IMR-90 (cell line): ENCODE measurements at regions of chr14 and their contacts with region 1.

Region 1: GRCh38 chr14:77067632-77068514 is 30.2 kb upstream of the CIPC start:
- DNase-seq: peak; percentile 57
- ATAC-seq: peak; percentile 85
- H3K4me3 ChIP-seq: no peak overlapping the region
- H3K27ac ChIP-seq: no peak overlapping the region
- H3K4me1 ChIP-seq: peaks cover 3% of the 10 kb centered on the region
- H3K27me3 ChIP-seq: no peaks in the 10 kb centered on the region
- CTCF ChIP-seq: peak; percentile 91
- POLR2A ChIP-seq: no peak
- RAD21 ChIP-seq: peak; percentile 98

Region 2: DNA sequence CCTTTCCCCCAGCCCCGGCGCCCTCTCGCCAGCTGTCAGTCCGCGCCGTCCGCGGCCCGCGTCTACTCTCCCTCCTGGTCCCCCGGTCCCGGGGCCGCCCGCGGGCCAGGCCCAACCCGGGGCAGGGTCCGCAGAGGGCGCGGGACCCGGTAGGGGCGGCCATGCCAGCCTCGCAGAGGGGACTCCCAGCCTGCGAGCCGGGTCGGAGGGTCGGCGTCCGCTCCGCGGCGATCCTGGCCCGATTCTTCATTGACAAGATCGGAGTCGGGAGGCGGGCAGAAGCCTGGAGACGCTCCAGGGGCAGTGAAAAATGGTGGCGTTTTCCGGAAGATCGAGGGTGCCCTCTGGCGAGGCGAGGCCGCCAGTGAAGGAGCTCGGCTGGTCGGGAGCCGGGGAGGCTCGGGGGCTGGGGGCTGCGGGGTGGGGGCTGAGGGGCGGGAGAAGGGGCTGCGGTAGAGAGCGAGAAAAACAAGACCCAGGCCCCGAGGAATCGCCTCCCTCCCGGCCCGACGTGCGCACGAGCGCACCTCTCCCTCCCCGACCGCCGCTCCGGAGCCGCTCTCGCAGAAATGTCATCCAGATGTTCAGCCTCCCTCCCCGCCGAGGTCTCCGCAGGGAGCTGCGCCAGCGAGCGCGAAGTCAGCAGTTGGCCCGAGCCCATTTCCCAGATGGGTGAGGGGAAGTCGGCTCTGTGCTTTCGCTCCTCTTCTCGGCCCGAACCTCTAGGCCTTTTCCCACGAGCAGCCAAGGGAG is 1085.4 kb before region 1 on chr14:
- CTCF ChIA-PET with region 1: no interaction called
- POLR2A ChIA-PET with region 1: no interaction called
- dilution Hi-C with region 1: no loop called
- in situ Hi-C with region 1: loop called (anchors 25 kb)
- intact Hi-C with region 1: no loop called
- DNase-seq: peak; percentile 77
- ATAC-seq: peak; percentile 72
- H3K4me3 ChIP-seq: peak overlapping the region; percentile 50
- H3K27ac ChIP-seq: peak overlapping the region; percentile 66
- H3K4me1 ChIP-seq: peaks cover 7% of the 10 kb centered on the region; the same call in 1 of the 2 replicates
- H3K27me3 ChIP-seq: no peaks in the 10 kb centered on the region; the same call in 1 of the 2 replicates
- CTCF ChIP-seq: peak; percentile 72
- POLR2A ChIP-seq: peak; percentile 7; the same call in 1 of the 2 replicates
- RAD21 ChIP-seq: peak; percentile 81

Region 3: GRCh38 chr14:76337635-76338545 is 730.0 kb before region 1 on chr14:
- CTCF ChIA-PET with region 1: no interaction called
- POLR2A ChIA-PET with region 1: no interaction called
- dilution Hi-C with region 1: no loop called
- in situ Hi-C with region 1: no loop called
- intact Hi-C with region 1: no loop called
- DNase-seq: no peak
- ATAC-seq: no peak
- H3K4me3 ChIP-seq: no peak overlapping the region
- H3K27ac ChIP-seq: no peak overlapping the region
- H3K4me1 ChIP-seq: no peaks in the 10 kb centered on the region
- H3K27me3 ChIP-seq: peaks cover 14% of the 10 kb centered on the region
- CTCF ChIP-seq: no peak
- POLR2A ChIP-seq: no peak
- RAD21 ChIP-seq: no peak

Region 4: GRCh38 chr14:76910371-76910890 is 157.4 kb before region 1 on chr14:
- CTCF ChIA-PET with region 1: interaction called, 22 read pairs
- POLR2A ChIA-PET with region 1: no interaction called
- dilution Hi-C with region 1: no loop called
- in situ Hi-C with region 1: loop called (anchors 5 kb)
- intact Hi-C with region 1: loop called (anchors 1 kb)
- DNase-seq: no peak
- ATAC-seq: no peak
- H3K4me3 ChIP-seq: no peak overlapping the region
- H3K27ac ChIP-seq: no peak overlapping the region
- H3K4me1 ChIP-seq: peaks cover 5% of the 10 kb centered on the region
- H3K27me3 ChIP-seq: no peaks in the 10 kb centered on the region
- CTCF ChIP-seq: no peak
- POLR2A ChIP-seq: no peak
- RAD21 ChIP-seq: no peak

Region 5: GRCh38 chr14:77040059-77040740 is 27.7 kb before region 1 on chr14:
- CTCF ChIA-PET with region 1: interaction called, 3 read pairs
- POLR2A ChIA-PET with region 1: interaction called, 25 read pairs
- dilution Hi-C with region 1: no loop called
- in situ Hi-C with region 1: no loop called
- intact Hi-C with region 1: no loop called
- DNase-seq: peak; percentile 99
- ATAC-seq: peak; percentile 50
- H3K4me3 ChIP-seq: peak overlapping the region; percentile 6; the same call in 1 of the 2 replicates
- H3K27ac ChIP-seq: peak overlapping the region; percentile 84
- H3K4me1 ChIP-seq: peaks cover 42% of the 10 kb centered on the region
- H3K27me3 ChIP-seq: no peaks in the 10 kb centered on the region
- CTCF ChIP-seq: no peak
- POLR2A ChIP-seq: no peak
- RAD21 ChIP-seq: no peak

Region 6: GRCh38 chr14:77097700-77098528 is 30.0 kb after region 1 on chr14 and contains the start of gene CIPC:
- CTCF ChIA-PET with region 1: interaction called, 6 read pairs
- POLR2A ChIA-PET with region 1: no interaction called
- dilution Hi-C with region 1: no loop called
- in situ Hi-C with region 1: no loop called
- intact Hi-C with region 1: loop called (anchors 2 kb)
- DNase-seq: peak; percentile 98
- ATAC-seq: peak; percentile 95
- H3K4me3 ChIP-seq: peak within 1 kb of the TSS; percentile 82
- H3K27ac ChIP-seq: peak within 1 kb of the TSS; percentile 93
- H3K4me1 ChIP-seq: peaks cover 6% of the 10 kb centered on the region
- H3K27me3 ChIP-seq: no peaks in the 10 kb centered on the region
- CTCF ChIP-seq: no peak
- POLR2A ChIP-seq: peak; percentile 82
- RAD21 ChIP-seq: no peak
- total RNA-seq, gene CIPC: 12.9 and 13.1 TPM in 2 replicates

Region 7: GRCh38 chr14:77151918-77152588 is 84.2 kb after region 1 on chr14:
- CTCF ChIA-PET with region 1: no interaction called
- POLR2A ChIA-PET with region 1: no interaction called
- dilution Hi-C with region 1: no loop called
- in situ Hi-C with region 1: no loop called
- intact Hi-C with region 1: no loop called
- DNase-seq: peak; percentile 28
- ATAC-seq: peak; percentile 89
- H3K4me3 ChIP-seq: no peak overlapping the region
- H3K27ac ChIP-seq: no peak overlapping the region
- H3K4me1 ChIP-seq: no peaks in the 10 kb centered on the region
- H3K27me3 ChIP-seq: peaks cover 28% of the 10 kb centered on the region
- CTCF ChIP-seq: peak; percentile 39
- POLR2A ChIP-seq: no peak
- RAD21 ChIP-seq: peak; percentile 47